ENCODE measurements at regions of chr15 and their contacts with region 1.

Region 1: DNA sequence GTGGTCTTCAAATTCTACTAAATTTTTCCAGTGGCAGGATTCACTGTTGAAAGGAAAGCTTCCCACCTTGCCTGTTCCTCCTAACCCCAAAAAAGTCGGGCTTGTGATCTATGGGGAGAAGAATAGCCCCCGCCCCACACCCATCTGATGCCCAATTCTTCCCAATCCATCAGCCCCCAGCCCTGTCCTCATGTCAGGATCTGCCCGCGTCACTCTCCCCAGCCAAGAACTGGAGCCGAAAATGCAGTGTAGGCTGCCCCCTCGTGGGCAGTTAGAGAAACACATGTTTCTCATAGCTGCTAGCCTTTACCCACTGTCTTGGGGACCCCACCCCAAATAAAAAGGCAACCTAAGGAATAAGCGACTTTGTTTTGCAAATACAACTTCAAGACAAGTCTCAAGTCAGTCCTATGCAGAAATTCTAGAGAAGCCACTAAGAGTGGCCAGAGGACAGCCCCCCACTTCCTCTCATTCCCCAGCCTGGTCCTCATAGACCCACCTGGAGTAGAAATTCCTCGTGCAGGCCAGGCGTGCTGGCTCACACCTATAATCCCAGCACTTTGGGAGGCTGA is 13.0 kb upstream of the CSK start:
- H3K4me3 ChIP-seq: no peak overlapping the region
- H3K27ac ChIP-seq: no peak overlapping the region
- H3K4me1 ChIP-seq: no peaks in the 10 kb centered on the region
- CTCF ChIP-seq: peak; percentile 89

Region 2: GRCh38 chr15:74025436-74025835 is 743.4 kb before region 1 on chr15:
- CTCF ChIA-PET with region 1: no interaction called
- POLR2A ChIA-PET with region 1: no interaction called
- H3K4me3 ChIP-seq: no peak overlapping the region
- H3K27ac ChIP-seq: no peak overlapping the region
- H3K4me1 ChIP-seq: no peaks in the 10 kb centered on the region
- CTCF ChIP-seq: no peak

Region 3: DNA sequence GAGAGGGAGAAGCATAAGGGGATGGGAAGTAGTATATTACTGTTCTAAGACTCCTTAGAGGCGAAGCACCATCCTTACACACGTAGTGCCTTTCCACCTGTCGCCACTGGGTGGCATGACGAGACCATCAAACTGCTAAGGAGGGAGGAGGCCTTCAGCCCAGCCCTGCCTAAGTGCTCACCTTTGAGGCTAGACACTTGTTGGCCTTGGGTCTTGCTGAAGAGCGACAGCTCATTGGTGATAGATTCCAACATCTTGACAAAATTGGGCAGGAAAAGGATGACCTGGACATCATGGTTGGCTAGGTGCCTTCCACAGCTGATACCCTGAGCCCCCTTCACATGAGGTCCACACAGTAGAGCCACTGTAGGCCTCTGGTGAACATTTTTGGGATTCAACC is 133.6 kb before region 1 on chr15:
- CTCF ChIA-PET with region 1: interaction called, 800 read pairs
- POLR2A ChIA-PET with region 1: interaction called, 10 read pairs
- H3K4me3 ChIP-seq: no peak overlapping the region
- H3K27ac ChIP-seq: no peak overlapping the region
- H3K4me1 ChIP-seq: no peaks in the 10 kb centered on the region
- CTCF ChIP-seq: peak; percentile 94

Region 4: GRCh38 chr15:74695597-74696397 is 73.1 kb before region 1 on chr15 and contains the start of gene EDC3:
- CTCF ChIA-PET with region 1: interaction called, 11 read pairs
- POLR2A ChIA-PET with region 1: no interaction called
- H3K4me3 ChIP-seq: peak within 1 kb of the TSS; percentile 85
- H3K27ac ChIP-seq: peak within 1 kb of the TSS; percentile 76
- H3K4me1 ChIP-seq: peaks cover 5% of the 10 kb centered on the region; the same call in 1 of the 2 replicates
- CTCF ChIP-seq: no peak; the same call in 1 of the 2 replicates

Region 5: DNA sequence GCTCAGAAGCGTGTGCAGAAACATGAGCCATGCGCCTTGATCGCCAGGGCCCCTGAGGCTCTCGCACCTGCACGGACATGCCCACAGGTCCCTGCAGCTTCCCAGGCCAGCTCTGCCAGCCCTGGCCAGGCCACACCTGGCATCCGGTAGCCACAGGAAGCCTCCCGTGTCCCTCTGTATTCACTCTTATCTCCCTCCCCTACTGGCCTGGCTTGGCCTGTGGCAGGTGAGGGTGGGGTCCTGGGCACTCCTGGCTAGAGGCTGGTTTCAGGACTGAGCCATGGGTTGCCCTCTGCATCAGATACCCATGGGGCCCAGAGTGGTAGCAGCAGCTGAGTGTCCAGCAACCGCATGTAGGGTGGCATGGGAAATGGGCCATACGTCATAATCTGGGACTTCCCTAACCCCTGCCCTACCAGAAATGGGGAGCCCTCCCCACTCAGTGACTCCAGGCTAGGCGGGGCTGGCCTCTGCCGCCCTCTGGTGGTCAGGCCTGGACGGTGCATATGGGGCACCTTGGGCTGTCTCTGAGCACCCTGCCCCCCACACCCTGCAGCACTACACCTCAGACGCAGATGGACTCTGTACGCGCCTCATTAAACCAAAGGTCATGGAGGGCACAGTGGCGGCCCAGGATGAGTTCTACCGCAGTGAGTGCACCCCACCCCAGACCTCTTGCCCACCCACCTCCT is 31.1 kb after region 1 on chr15:
- CTCF ChIA-PET with region 1: interaction called, 649 read pairs
- POLR2A ChIA-PET with region 1: no interaction called
- H3K4me3 ChIP-seq: no peak overlapping the region
- H3K27ac ChIP-seq: peak overlapping the region; percentile 20; the same call in 1 of the 2 replicates
- H3K4me1 ChIP-seq: no peaks in the 10 kb centered on the region
- CTCF ChIP-seq: peak; percentile 97

Region 6: DNA sequence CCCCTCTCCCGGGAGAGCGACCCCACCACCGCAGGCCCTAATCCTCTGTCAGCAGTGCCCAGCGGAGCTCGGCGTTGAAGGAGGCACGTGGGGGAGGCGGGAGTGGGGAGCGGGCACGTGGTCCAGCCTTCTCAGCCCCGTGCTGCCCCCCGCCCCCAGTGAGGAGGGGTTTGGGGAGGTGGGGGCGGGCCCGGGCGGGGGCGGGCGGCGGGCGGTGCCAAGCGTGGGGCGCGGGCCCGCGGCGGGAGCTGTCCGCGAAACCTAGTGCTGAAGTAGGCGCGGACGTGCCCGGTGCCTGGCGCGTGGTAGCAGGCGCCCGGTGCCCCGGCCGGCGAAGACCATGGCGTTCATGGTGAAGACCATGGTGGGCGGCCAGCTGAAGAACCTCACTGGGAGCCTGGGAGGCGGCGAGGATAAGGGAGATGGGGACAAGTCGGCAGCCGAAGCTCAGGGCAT is 57.5 kb after region 1 on chr15 and contains the start of gene CPLX3:
- CTCF ChIA-PET with region 1: interaction called, 63 read pairs
- POLR2A ChIA-PET with region 1: interaction called, 4 read pairs
- H3K4me3 ChIP-seq: no peak within 1 kb of the TSS
- H3K27ac ChIP-seq: no peak within 1 kb of the TSS
- H3K4me1 ChIP-seq: 0 out of 2 replicates have a peak, but pooled peaks cover 2% of the 10 kb centered on the region
- CTCF ChIP-seq: no peak

Region 7: DNA sequence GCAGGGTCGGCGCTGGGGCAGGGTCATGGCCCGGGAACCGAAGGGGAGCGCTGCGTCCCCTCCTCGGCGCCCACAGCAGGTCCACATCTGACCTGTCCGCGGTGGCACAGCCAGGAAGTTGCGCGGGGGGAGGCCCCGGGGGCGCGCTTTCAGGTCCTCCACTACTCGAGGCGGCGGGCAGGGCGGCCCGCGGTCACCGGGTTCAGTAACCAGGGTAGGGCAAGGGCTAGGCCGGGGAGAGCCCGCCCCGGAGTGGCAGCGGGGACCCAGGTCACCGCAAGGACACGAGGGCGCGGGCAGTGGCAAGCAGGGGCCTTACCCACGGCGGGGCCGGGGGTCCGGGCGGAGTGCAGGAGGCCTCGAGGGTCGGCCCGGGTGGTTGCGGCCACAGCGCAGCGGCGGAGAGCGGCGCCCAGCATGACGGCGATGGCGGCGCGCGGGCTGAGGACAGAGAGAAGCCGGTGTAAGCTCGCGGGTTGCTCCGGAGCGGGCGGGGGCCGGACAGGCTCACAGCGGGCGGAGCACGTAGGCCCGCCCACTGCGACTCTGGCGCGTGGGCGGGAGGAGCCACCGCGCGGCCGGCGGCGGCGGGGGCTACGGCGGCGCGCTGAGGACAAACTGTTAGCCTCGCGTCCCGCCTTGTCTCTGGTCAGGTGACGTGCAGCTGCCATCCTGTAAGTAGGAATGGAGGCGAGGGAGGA is 168.9 kb after region 1 on chr15 and contains the start of gene COX5A:
- CTCF ChIA-PET with region 1: interaction called, 11 read pairs
- POLR2A ChIA-PET with region 1: interaction called, 4 read pairs
- H3K4me3 ChIP-seq: peak within 1 kb of the TSS; percentile 87
- H3K27ac ChIP-seq: peak within 1 kb of the TSS; percentile 94
- H3K4me1 ChIP-seq: peaks cover 7% of the 10 kb centered on the region
- CTCF ChIP-seq: peak; percentile 87

Region 8: DNA sequence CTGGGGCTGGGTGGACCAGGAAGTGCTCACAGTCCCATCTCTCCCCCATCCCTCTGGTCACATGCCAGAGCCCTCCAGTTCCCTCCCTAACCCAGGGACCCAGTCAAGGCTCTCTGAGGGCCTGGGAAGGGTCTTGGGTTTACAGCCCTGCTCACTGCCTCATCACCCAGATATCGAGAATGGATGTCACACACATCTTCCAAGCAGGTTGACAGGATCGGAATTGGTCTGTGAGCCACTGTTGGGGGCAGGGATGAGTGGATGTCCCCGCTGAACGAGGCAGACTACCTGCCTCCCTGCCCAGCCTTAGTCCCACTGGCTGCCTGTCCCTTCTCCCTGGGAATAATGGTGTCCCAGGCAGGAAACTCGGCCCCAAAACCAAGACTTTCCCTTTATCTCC is 469.3 kb after region 1 on chr15:
- CTCF ChIA-PET with region 1: no interaction called
- POLR2A ChIA-PET with region 1: no interaction called
- H3K4me3 ChIP-seq: no peak overlapping the region
- H3K27ac ChIP-seq: no peak overlapping the region
- H3K4me1 ChIP-seq: no peaks in the 10 kb centered on the region
- CTCF ChIP-seq: no peak

Region 9: GRCh38 chr15:75307778-75308391 is 539.0 kb after region 1 on chr15:
- CTCF ChIA-PET with region 1: interaction called, 10 read pairs
- POLR2A ChIA-PET with region 1: no interaction called
- H3K4me3 ChIP-seq: no peak overlapping the region
- H3K27ac ChIP-seq: no peak overlapping the region
- H3K4me1 ChIP-seq: no peaks in the 10 kb centered on the region
- CTCF ChIP-seq: peak; percentile 89